PC-3 (cell line): ENCODE measurements at regions of chr10 and their contacts with region 1.

Region 1: GRCh38 chr10:28241741-28242399 is 61.0 kb downstream of the MPP7 start:
- DNase-seq: peak; percentile 76
- ATAC-seq: peak; percentile 92
- H3K4me3 ChIP-seq: no peak overlapping the region
- H3K27ac ChIP-seq: no peak overlapping the region
- H3K4me1 ChIP-seq: peaks cover 14% of the 10 kb centered on the region
- H3K27me3 ChIP-seq: no peaks in the 10 kb centered on the region
- CTCF ChIP-seq: peak; percentile 89

Region 2: DNA sequence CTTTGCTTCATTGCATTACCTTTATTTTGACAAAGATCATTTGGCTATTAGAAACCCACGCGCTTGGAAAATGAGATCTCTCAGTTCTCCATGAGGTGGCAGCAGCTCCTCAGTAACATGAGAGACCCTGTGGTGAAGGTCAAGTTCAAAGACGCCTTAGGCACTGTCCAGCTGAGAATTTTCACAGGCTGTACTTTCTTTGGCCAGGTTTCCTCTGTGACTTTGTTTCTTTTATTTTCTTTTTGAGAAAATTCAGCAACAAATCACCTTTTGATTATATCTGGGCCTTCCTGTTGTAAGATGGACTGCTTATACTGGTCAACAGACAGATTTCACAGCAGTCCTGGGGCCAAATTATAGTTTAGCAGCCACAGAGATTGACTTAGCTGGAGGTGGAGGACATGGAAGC is 683.3 kb before region 1 on chr10:
- CTCF ChIA-PET with region 1: interaction called, 9 read pairs
- POLR2A ChIA-PET with region 1: no interaction called
- intact Hi-C with region 1: loop called (anchors 1 kb)
- DNase-seq: peak; percentile 69
- ATAC-seq: peak; percentile 76
- H3K4me3 ChIP-seq: no peak overlapping the region
- H3K27ac ChIP-seq: no peak overlapping the region
- H3K4me1 ChIP-seq: no peaks in the 10 kb centered on the region
- H3K27me3 ChIP-seq: no peaks in the 10 kb centered on the region
- CTCF ChIP-seq: peak; percentile 81

Region 3: GRCh38 chr10:27783660-27784059 is 458.2 kb before region 1 on chr10:
- CTCF ChIA-PET with region 1: interaction called, 5 read pairs
- POLR2A ChIA-PET with region 1: no interaction called
- intact Hi-C with region 1: loop called (anchors 1 kb)
- DNase-seq: peak; percentile 78
- ATAC-seq: peak; percentile 95
- H3K4me3 ChIP-seq: no peak overlapping the region
- H3K27ac ChIP-seq: no peak overlapping the region
- H3K4me1 ChIP-seq: peaks cover 3% of the 10 kb centered on the region; the same call in 1 of the 2 replicates
- H3K27me3 ChIP-seq: no peaks in the 10 kb centered on the region
- CTCF ChIP-seq: peak; percentile 74

Region 4: GRCh38 chr10:28137907-28138880 is 103.7 kb before region 1 on chr10:
- CTCF ChIA-PET with region 1: interaction called, 4 read pairs
- POLR2A ChIA-PET with region 1: no interaction called
- intact Hi-C with region 1: loop called (anchors 1 kb)
- DNase-seq: peak; percentile 55
- ATAC-seq: peak; percentile 58
- H3K4me3 ChIP-seq: no peak overlapping the region
- H3K27ac ChIP-seq: peak overlapping the region; percentile 12; the same call in 1 of the 2 replicates
- H3K4me1 ChIP-seq: peaks cover 24% of the 10 kb centered on the region
- H3K27me3 ChIP-seq: no peaks in the 10 kb centered on the region
- CTCF ChIP-seq: no peak

Region 5: GRCh38 chr10:28202941-28203352 is 38.9 kb before region 1 on chr10:
- CTCF ChIA-PET with region 1: no interaction called
- POLR2A ChIA-PET with region 1: interaction called, 4 read pairs
- intact Hi-C with region 1: loop called (anchors 5 kb)
- DNase-seq: peak; percentile 4
- ATAC-seq: no peak
- H3K4me3 ChIP-seq: no peak overlapping the region
- H3K27ac ChIP-seq: peak overlapping the region; percentile 99
- H3K4me1 ChIP-seq: peaks cover 39% of the 10 kb centered on the region
- H3K27me3 ChIP-seq: no peaks in the 10 kb centered on the region
- CTCF ChIP-seq: no peak